Transverse colon (tissue), 4 donors: ENCODE measurements at regions of chr3 and their contacts with region 1.

Region 1: GRCh38 chr3:126746395-126747177 is 42.5 kb downstream of the CHCHD6 start:
- DNase-seq: no peak
- H3K4me3 ChIP-seq: no peak overlapping the region
- H3K27ac ChIP-seq: no peak overlapping the region
- H3K4me1 ChIP-seq: peaks cover 0 to 9% (median 2%) of the 10 kb centered on the region in 4 donors
- H3K27me3 ChIP-seq: no peaks in the 10 kb centered on the region
- CTCF ChIP-seq: no peak
- EP300 ChIP-seq: no peak
- POLR2A ChIP-seq: no peak

Region 2: DNA sequence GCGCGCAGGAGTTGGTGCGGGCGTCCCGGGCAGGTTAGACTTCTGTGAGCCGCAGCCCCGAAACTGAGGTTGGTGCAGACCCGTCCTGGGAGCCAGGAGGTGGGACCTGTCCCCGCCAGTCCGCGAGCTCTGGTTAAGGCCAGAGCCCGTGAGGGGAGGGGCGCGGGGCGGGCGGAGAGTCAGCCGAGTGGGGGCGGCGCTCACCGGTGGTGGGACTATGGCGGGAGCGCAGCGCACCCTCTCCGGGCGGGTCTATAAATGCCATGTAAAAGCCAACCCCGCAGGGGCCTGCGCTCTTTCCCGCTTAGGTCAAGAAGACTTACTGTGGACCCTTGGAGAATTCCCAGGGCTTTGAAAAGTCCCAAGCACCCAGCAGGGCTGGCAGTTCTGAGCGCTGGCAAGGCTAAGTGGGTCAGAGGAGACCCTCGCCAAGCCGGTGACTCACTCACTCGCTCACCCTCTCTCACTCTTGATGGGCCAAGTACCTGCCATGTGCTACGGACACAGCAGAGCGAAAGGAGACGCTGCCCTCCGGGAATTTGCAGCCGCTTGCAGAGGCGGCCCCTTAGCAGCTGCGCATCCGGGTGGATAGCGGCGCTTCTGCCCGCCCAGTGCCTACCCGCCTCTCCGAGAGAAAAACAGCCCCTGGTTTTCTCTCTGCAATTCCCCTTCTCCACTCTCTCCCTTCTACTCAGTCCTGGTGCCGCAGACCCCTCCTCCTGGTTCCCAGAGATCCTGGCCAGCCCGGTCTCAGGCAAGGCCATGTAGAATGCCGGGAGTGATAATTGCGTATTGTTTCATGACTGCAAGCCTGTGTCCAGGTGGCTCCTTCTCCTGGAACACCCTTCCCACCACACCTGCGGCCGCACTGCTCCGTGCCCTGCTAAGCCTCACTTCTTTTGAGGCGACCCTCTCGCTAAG is 565.8 kb before region 1 on chr3 and contains the start of gene ALDH1L1:
- in situ Hi-C with region 1: no loop called
- intact Hi-C with region 1: no loop called
- DNase-seq: peak; percentile 57
- H3K4me3 ChIP-seq: peak within 1 kb of the TSS; percentile 49 to 60 (median 52)
- H3K27ac ChIP-seq: peak within 1 kb of the TSS; percentile 80 to 88 (median 83)
- H3K4me1 ChIP-seq: peaks cover 5 to 25% (median 17%) of the 10 kb centered on the region in 4 donors
- H3K27me3 ChIP-seq: peaks cover 40% of the 10 kb centered on the region
- CTCF ChIP-seq: no peak
- EP300 ChIP-seq: peak; percentile 66
- POLR2A ChIP-seq: peak; percentile 44
- total RNA-seq, gene ALDH1L1: 5.9 to 32.2 (median 16.1) TPM

Region 3: GRCh38 chr3:127455541-127456450 is 709.2 kb after region 1 on chr3:
- in situ Hi-C with region 1: loop called in 1 of 4 experiments (anchors 25 kb)
- intact Hi-C with region 1: loop called (anchors 10 kb)
- DNase-seq: peak; percentile 66
- H3K4me3 ChIP-seq: peak overlapping the region in 2 of 4 donors; percentile 10 to 33
- H3K27ac ChIP-seq: no peak overlapping the region
- H3K4me1 ChIP-seq: peaks cover 9 to 24% (median 23%) of the 10 kb centered on the region in 4 donors
- H3K27me3 ChIP-seq: peaks cover 64% of the 10 kb centered on the region
- CTCF ChIP-seq: peak; percentile 63 to 89 (median 87)
- EP300 ChIP-seq: no peak
- POLR2A ChIP-seq: no peak